ENCODE measurements at regions of chr15 and their contacts with region 1.

Region 1: DNA sequence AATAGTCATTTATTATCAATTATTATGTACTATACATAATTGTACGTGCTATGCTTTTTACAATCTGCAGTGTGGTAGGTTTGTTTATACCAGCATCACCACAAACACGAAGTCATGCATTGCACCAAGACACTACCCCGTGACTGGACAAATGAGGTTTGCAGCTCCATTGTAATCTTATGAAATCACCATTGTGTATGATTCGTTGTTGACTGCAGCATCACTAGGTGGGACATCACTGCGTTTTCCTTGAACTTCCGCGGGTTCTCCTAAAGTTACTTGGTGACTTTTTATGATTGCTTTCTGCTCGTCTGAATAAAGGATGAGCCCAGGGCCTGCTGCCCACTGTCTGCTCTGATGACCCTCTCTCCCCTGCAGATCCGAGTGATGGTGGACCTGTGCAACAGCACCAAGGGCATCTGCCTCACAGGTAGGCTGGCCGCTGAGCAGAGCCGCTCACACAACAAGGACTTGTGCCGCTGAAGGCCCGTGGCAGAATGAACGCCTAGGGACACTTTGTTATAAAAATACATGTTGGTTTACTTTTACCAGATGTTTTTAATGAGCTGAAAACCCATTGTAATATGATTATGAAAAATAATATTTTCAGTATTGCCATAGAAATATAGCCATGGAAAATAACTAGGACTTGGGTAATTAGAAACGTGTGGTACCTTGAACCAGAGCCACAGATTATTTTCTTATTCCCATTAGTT is 35.8 kb downstream of the GLDN start:
- DNase-seq: no peak
- H3K4me3 ChIP-seq: no peak overlapping the region
- H3K27ac ChIP-seq: peak overlapping the region; percentile 53 to 76
- H3K4me1 ChIP-seq: no peaks in the 10 kb centered on the region
- H3K27me3 ChIP-seq: no peaks in the 10 kb centered on the region
- CTCF ChIP-seq: no peak
- POLR2A ChIP-seq: no peak

Region 2: GRCh38 chr15:50166216-50166615 is 1211.0 kb before region 1 on chr15:
- intact Hi-C with region 1: loop called (anchors 10 kb)
- DNase-seq: no peak
- H3K4me3 ChIP-seq: no peak overlapping the region
- H3K27ac ChIP-seq: no peak overlapping the region
- H3K4me1 ChIP-seq: no peaks in the 10 kb centered on the region
- H3K27me3 ChIP-seq: no peaks in the 10 kb centered on the region
- CTCF ChIP-seq: no peak
- POLR2A ChIP-seq: no peak

Region 3: DNA sequence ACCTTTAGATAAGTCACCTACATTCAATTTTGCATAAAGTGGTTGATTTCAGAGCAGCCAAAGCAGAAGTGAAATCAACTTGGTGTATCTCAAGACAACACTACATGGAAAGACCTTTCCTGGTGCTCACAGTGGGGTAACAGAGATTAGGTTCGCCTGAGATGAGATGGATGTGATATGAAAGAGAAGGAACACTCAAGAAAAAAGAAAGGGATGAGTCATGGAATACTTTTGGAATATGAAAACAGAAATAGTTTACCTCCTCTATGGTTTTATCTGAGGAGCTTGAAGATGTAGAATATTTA is 522.2 kb before region 1 on chr15:
- intact Hi-C with region 1: no loop called
- DNase-seq: no peak
- H3K4me3 ChIP-seq: no peak overlapping the region
- H3K27ac ChIP-seq: peak overlapping the region; percentile 75 to 82
- H3K4me1 ChIP-seq: no peaks in the 10 kb centered on the region
- H3K27me3 ChIP-seq: no peaks in the 10 kb centered on the region
- CTCF ChIP-seq: no peak
- POLR2A ChIP-seq: no peak

Region 4: DNA sequence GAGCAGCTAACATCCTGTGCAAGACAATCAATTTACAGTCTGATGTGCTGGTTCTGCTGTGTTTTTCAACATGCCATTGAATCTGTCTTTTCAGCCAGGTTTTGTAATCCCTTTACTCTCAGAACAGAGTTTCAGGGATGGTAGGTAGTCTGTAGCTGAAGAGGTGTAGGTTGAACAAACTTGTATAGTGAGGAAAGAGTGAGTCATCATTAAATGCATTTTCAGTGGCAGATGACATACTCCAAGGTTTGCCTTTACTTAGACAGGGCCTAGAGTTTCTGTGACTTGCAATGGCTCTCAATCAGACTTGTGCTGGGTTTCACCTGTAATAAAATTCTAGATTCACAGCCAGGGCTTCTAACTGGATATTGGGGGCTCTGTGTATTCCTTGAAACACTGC is 133.5 kb before region 1 on chr15:
- intact Hi-C with region 1: loop called (anchors 10 kb)
- DNase-seq: no peak
- H3K4me3 ChIP-seq: no peak overlapping the region
- H3K27ac ChIP-seq: no peak overlapping the region
- H3K4me1 ChIP-seq: no peaks in the 10 kb centered on the region
- H3K27me3 ChIP-seq: no peaks in the 10 kb centered on the region
- CTCF ChIP-seq: no peak
- POLR2A ChIP-seq: no peak

Region 5: DNA sequence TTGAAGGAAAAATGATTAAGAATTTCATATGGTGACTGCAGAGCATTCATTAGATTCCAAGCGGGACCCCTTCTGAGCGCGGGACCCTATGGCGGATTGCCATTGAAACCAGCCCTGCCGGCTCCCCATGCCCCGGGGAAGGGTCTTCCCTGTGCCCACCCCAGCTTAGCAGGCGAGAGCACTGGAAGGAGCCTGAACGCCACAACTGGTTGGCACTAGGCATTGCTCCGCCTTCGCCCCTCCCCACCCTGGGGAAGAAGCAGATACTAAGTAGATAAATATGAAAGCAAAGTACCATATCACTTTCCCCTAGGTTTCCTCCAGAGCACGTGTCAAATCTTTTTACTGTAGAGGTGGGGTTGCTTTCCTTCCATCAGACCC is 109.5 kb before region 1 on chr15:
- intact Hi-C with region 1: no loop called
- DNase-seq: no peak
- H3K4me3 ChIP-seq: peak overlapping the region; percentile 46 to 72 (median 54)
- H3K27ac ChIP-seq: peak overlapping the region in 1 of 2 donors; percentile 81
- H3K4me1 ChIP-seq: peaks cover 6 to 9% of the 10 kb centered on the region in 2 donors
- H3K27me3 ChIP-seq: no peaks in the 10 kb centered on the region
- CTCF ChIP-seq: no peak
- POLR2A ChIP-seq: no peak

Measured in breast epithelium (tissue), 4 donors.